Transverse colon (tissue), 4 donors: ENCODE measurements at regions of chr7 and their contacts with region 1.

Region 1: DNA sequence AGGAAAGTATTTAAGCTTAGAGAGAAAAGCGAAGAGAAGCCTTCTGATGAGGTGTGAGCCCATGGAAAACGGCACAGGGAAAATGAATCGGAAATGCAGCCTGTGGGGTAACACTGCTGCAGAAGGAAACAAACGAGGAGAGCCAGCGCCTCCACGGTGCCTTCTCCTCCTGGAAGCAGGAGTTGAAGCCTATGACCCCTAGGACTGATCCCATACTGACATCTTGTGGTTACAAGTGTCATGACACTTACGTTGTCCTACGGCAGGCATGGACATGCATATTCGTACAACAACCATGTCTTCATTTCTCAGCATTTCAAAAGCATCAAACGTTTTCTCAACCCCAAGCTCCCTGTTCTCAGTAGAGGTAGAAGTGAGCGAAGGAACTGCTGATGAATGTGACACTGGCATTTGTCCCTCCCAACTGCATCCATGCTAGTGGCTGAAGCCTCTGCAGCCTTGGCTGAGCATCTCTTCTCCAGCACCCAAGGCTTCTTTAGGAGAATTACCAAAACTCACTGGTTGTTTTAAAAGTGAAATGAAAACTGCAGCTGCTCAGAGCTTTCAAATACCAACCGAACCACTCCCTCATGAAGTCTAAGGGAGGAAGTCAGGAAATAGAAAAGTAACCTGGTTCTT is 160.2 kb downstream of the JAZF1 start:
- DNase-seq: peak; percentile 58
- H3K4me3 ChIP-seq: no peak overlapping the region
- H3K27ac ChIP-seq: peak overlapping the region in 1 of 4 donors; percentile 4
- H3K4me1 ChIP-seq: peaks cover 0 to 9% (median 8%) of the 10 kb centered on the region in 4 donors
- H3K27me3 ChIP-seq: no peaks in the 10 kb centered on the region
- CTCF ChIP-seq: peak; percentile 79 to 91 (median 84)
- EP300 ChIP-seq: no peak
- POLR2A ChIP-seq: no peak

Region 2: GRCh38 chr7:28096713-28097112 is 76.3 kb after region 1 on chr7:
- in situ Hi-C with region 1: no loop called
- intact Hi-C with region 1: loop called (anchors 5 kb)
- DNase-seq: peak; percentile 44
- H3K4me3 ChIP-seq: no peak overlapping the region
- H3K27ac ChIP-seq: peak overlapping the region in 2 of 4 donors; percentile 1 to 47
- H3K4me1 ChIP-seq: peaks cover 0 to 18% (median 4%) of the 10 kb centered on the region in 4 donors
- H3K27me3 ChIP-seq: no peaks in the 10 kb centered on the region
- CTCF ChIP-seq: peak; percentile 77 to 84 (median 81)
- EP300 ChIP-seq: no peak
- POLR2A ChIP-seq: no peak